Cardiac septum (tissue), 1 donor: ENCODE measurements at regions of chr7 and their contacts with region 1.

Region 1: GRCh38 chr7:99465421-99465768 is 572 bp downstream of the ATP5MF start:
- DNase-seq: no peak

Region 2: GRCh38 chr7:99438573-99439480 is 26.6 kb before region 1 on chr7 and contains the starts of genes CPSF4 and PTCD1:
- intact Hi-C with region 1: loop called (anchors 1 kb)
- DNase-seq: peak; percentile 98
- total RNA-seq, gene CPSF4: 15.0 TPM
- total RNA-seq, gene PTCD1: 3.4 TPM

Region 3: GRCh38 chr7:99837649-99838361 is 372.4 kb after region 1 on chr7:
- intact Hi-C with region 1: no loop called
- DNase-seq: no peak